CD4-positive, alpha-beta memory T cell (primary cell): ENCODE measurements at regions of chr6 and their contacts with region 1.

Region 1: DNA sequence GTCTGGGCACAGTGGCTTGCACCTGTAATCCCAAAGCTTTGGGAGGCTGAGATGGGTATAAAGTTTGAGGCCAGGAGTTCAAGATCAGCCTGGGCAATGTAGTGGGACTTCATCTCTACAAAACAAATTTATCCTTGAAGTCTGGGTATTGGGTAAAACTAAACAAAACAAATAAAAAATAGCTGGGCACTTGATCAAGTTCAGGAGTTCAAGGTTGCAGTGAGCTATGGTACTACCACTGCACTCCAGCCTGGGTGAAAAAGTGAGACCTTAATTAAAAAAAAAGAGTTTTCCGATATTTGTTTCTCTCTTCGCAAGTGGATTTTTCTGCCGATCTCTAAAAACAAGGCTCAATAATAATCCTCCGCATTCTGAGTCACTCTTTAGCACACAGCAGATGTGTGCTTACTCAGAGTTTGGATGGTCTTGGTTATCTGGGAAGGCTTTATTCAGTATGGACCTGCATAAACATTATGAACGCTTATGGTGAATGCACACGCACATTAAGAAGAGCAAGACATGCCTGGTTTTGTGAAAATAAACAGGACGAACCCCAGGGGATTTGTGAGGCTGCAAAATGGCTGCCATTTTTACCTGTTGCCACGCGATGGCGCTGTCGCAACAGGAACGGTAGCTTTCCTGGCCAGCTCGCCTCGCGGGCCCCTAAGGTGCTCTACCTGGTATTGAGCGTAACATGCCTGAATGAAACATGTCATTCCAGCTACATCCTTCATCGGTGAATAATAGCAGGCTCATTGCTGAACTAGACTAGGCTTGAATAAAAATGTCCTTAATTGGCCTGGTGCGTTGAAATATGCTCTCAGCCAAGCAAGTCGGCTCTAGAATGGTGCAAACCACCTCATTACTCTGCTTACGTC is 6.0 kb downstream of the OPN5 start:
- DNase-seq: peak; percentile 39 to 49 (median 46)
- H3K4me3 ChIP-seq: no peak overlapping the region
- H3K4me3 Mint-ChIP-seq: peak overlapping the region in 4 of 8 donors; percentile 13 to 41 (median 27)
- H3K27ac ChIP-seq: no peak overlapping the region
- H3K27ac Mint-ChIP-seq: peak overlapping the region in 1 of 7 donors; percentile 11
- H3K4me1 ChIP-seq: peaks cover 6% of the 10 kb centered on the region
- H3K4me1 Mint-ChIP-seq: peaks cover 3 to 13% (median 6%) of the 10 kb centered on the region in 4 donors
- H3K27me3 ChIP-seq: no peaks in the 10 kb centered on the region
- H3K27me3 Mint-ChIP-seq: peaks cover 12 to 14% of the 10 kb centered on the region in 2 donors

Region 2: DNA sequence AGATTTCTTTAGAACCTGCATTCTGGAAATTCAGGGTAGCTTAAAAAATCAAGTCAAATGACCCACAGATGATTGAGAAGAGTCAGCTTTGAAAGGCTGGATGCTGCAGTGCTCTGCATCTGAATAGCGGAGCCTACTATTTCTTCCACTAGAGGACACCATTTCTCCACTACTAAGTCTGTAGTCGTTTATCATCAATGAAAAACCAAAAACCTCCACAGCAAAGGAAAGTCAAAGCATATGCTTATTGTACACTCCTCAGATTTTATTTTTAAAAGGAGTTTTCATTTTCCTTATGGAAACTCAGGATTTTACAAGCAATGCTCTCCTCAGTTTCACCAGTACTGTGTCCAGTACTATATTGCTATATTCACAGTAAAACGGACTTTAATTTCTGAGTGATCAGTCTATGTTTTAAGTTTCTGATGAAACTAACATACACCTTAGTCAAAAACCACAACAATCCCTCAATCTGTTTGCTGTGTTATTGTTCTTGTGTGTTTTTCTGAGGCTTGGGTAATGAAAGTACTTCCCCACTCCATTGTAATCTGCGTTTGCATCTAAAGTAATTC is 1566.6 kb before region 1 on chr6:
- CTCF ChIA-PET with region 1: no interaction called
- POLR2A ChIA-PET with region 1: no interaction called
- intact Hi-C with region 1: no loop called
- DNase-seq: peak in 2 of 5 donors; percentile 4 to 9
- H3K4me3 ChIP-seq: no peak overlapping the region
- H3K4me3 Mint-ChIP-seq: no peak overlapping the region
- H3K27ac ChIP-seq: no peak overlapping the region
- H3K27ac Mint-ChIP-seq: no peak overlapping the region
- H3K4me1 ChIP-seq: no peaks in the 10 kb centered on the region
- H3K4me1 Mint-ChIP-seq: no peaks in the 10 kb centered on the region
- H3K27me3 ChIP-seq: no peaks in the 10 kb centered on the region
- H3K27me3 Mint-ChIP-seq: peaks cover 1 to 3% of the 10 kb centered on the region in 2 donors

Region 3: GRCh38 chr6:47407348-47408281 is 380.2 kb before region 1 on chr6:
- CTCF ChIA-PET with region 1: interaction called, 79 read pairs
- POLR2A ChIA-PET with region 1: no interaction called
- intact Hi-C with region 1: no loop called
- DNase-seq: no peak
- H3K4me3 ChIP-seq: no peak overlapping the region
- H3K4me3 Mint-ChIP-seq: no peak overlapping the region
- H3K27ac ChIP-seq: no peak overlapping the region
- H3K27ac Mint-ChIP-seq: no peak overlapping the region
- H3K4me1 ChIP-seq: no peaks in the 10 kb centered on the region
- H3K4me1 Mint-ChIP-seq: no peaks in the 10 kb centered on the region
- H3K27me3 ChIP-seq: no peaks in the 10 kb centered on the region
- H3K27me3 Mint-ChIP-seq: peaks cover 0 to 2% of the 10 kb centered on the region in 2 donors

Region 4: GRCh38 chr6:47631269-47631772 is 156.5 kb before region 1 on chr6:
- CTCF ChIA-PET with region 1: interaction called, 14 read pairs
- POLR2A ChIA-PET with region 1: no interaction called
- intact Hi-C with region 1: no loop called
- DNase-seq: peak; percentile 19 to 58 (median 50)
- H3K4me3 ChIP-seq: no peak overlapping the region
- H3K4me3 Mint-ChIP-seq: no peak overlapping the region
- H3K27ac ChIP-seq: no peak overlapping the region
- H3K27ac Mint-ChIP-seq: peak overlapping the region in 4 of 7 donors; percentile 25 to 58 (median 44)
- H3K4me1 ChIP-seq: peaks cover 12% of the 10 kb centered on the region
- H3K4me1 Mint-ChIP-seq: peaks cover 7 to 12% (median 10%) of the 10 kb centered on the region in 4 donors
- H3K27me3 ChIP-seq: no peaks in the 10 kb centered on the region
- H3K27me3 Mint-ChIP-seq: no peaks in the 10 kb centered on the region

Region 5: GRCh38 chr6:47801984-47802383 is 14.1 kb after region 1 on chr6:
- CTCF ChIA-PET with region 1: interaction called, 29 read pairs
- POLR2A ChIA-PET with region 1: no interaction called
- intact Hi-C with region 1: no loop called
- DNase-seq: no peak
- H3K4me3 ChIP-seq: no peak overlapping the region
- H3K4me3 Mint-ChIP-seq: no peak overlapping the region
- H3K27ac ChIP-seq: no peak overlapping the region
- H3K27ac Mint-ChIP-seq: no peak overlapping the region
- H3K4me1 ChIP-seq: no peaks in the 10 kb centered on the region
- H3K4me1 Mint-ChIP-seq: no peaks in the 10 kb centered on the region
- H3K27me3 ChIP-seq: no peaks in the 10 kb centered on the region
- H3K27me3 Mint-ChIP-seq: peaks cover 5 to 9% of the 10 kb centered on the region in 2 donors

Region 6: DNA sequence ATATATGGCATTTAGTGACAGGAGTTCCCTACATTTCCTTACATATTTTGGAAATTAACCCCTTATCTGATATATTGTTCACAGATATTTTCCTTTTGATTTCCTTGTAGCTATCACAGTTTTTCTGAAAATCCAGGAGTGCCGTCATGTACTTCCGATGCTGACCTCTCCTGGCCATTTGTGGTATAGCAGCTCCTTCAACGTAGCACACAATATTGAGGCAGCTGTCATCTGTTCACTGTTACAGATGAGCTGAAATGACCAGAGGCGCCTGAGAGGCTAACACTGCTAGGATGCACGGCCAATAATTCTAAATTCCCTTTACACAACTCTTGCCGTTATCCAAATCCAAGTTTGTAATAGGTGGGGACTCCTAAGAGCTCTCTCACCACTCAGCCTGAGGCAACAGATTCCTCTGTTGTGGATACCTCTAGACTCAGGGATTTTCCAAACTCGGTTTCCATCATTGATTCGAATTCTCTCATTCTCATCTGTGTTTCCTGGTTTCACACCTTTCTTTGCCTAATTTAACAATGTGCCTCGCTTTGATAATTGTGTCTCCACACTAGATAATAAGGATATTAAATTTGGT is 1622.2 kb after region 1 on chr6:
- CTCF ChIA-PET with region 1: interaction called, 39 read pairs
- POLR2A ChIA-PET with region 1: no interaction called
- intact Hi-C with region 1: no loop called
- DNase-seq: peak; percentile 11 to 53 (median 31)
- H3K4me3 ChIP-seq: no peak overlapping the region
- H3K4me3 Mint-ChIP-seq: no peak overlapping the region
- H3K27ac ChIP-seq: no peak overlapping the region
- H3K27ac Mint-ChIP-seq: no peak overlapping the region
- H3K4me1 ChIP-seq: no peaks in the 10 kb centered on the region
- H3K4me1 Mint-ChIP-seq: no peaks in the 10 kb centered on the region
- H3K27me3 ChIP-seq: no peaks in the 10 kb centered on the region
- H3K27me3 Mint-ChIP-seq: peaks cover 3% of the 10 kb centered on the region in 2 donors